Heart left ventricle (tissue), 16 donors: ENCODE measurements at regions of chrX and their contacts with region 1.

Region 1: GRCh38 chrX:71393919-71394318 is 27.8 kb downstream of the TAF1 start:
- DNase-seq: no peak
- ATAC-seq: no peak
- H3K4me3 ChIP-seq: no peak overlapping the region
- H3K27ac ChIP-seq: no peak overlapping the region
- H3K4me1 ChIP-seq: no peaks in the 10 kb centered on the region
- H3K27me3 ChIP-seq: no peaks in the 10 kb centered on the region
- CTCF ChIP-seq: no peak
- POLR2A ChIP-seq: no peak

Region 2: DNA sequence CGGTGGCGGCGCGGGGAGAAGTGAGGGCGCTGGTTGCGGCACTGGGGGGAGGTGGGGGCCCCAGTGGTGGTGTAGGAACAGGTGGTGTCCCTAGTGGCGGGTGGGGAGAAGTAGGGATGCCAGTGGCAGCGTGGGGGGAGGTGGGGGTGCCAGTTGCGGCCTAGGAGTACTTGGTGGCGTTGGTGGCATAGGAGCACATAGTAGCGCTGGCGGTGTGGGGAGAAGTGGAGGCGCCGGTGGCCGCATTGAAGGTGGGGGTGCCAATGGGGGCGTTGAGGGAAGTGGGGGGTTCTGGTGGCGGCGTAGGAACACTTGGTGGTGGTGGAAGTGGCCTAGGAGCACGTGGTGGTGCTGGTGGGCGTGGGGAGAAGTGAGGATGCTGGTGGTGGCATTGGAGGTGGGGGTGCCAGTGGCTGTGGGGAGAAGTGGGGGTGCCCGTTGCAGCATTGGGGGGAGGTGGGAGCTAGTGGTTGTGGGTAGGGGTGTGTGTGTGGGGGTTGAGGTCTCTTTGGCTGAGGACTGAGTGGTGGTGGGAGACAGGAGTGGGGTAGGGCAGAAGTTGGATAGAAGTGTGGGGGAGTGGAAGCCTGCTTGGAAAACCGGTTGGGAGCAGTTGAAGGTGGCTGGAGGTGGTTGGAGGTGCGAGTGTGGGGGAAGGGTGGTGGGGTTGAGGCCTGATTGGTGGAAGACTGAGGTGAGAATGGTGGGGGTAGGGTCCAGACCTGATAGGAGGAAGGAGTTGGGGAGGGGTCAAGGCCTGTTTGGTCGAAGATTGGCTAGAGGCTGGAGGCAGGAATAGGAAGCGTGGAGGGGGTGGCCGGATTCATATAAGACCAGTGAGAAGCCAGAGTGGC is 185.4 kb after region 1 on chrX:
- intact Hi-C with region 1: loop called in 1 of 10 experiments (anchors 10 kb)
- DNase-seq: no peak
- ATAC-seq: peak in 1 of 4 donors; percentile 18
- H3K4me3 ChIP-seq: no peak overlapping the region
- H3K27ac ChIP-seq: peak overlapping the region in 1 of 12 donors; percentile 46
- H3K4me1 ChIP-seq: no peaks in the 10 kb centered on the region
- H3K27me3 ChIP-seq: peaks cover 0 to 4% (median 0%) of the 10 kb centered on the region in 9 donors
- CTCF ChIP-seq: no peak
- POLR2A ChIP-seq: no peak